ENCODE measurements at regions of chr21 and their contacts with region 1.

Region 1: DNA sequence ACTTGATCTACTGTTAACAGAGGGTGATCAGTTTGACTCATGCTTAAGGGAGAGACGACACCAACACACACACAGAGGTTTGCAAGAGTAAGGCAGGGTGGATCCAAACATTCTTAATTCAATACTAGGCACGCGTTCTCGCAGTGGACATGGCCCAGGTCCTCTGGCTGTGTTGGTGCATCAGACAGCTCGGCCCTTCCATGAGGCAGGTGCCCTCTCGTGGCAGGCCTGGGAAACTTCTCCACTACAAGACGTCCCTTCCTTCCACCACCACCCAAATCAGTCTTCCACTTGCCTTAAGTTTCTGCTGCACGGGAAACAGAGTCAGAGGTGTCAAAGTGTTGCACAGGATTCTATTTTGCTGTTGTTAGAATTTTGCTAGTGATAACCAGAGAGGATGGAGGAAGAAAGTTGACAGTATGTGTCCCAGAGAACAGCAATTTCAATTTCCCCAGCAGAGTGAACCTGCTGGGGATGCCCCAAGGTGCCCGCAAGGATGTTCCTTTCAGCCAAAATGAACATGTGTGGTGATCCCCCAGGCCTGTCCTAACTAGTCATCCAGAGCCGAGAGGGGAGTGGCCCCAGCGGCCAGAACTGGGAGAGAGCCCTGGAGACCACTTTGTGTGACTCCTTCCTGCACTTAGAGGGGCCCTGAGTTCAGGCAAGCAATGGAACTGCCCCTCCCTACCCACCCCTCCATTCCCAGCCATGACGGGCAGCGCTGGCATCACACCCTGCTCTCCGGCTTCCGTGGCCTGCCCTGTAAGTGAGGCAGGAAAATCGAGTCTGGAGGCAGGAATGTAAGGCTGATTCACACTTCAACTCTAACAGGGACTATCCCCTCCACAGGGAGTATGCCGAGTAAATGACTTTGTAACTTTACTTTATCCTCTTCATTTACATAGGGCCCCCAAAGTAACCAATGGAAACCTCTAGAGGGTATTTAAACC is 34.8 kb downstream of the MX1 start:
- DNase-seq: peak; percentile 34
- ATAC-seq: peak; percentile 45 to 66
- H3K4me3 ChIP-seq: no peak overlapping the region
- H3K27ac ChIP-seq: no peak overlapping the region
- H3K4me1 ChIP-seq: no peaks in the 10 kb centered on the region
- H3K27me3 ChIP-seq: peaks cover 0 to 4% (median 0%) of the 10 kb centered on the region in 3 donors
- CTCF ChIP-seq: peak; percentile 40 to 73 (median 64)
- POLR2A ChIP-seq: no peak

Region 2: DNA sequence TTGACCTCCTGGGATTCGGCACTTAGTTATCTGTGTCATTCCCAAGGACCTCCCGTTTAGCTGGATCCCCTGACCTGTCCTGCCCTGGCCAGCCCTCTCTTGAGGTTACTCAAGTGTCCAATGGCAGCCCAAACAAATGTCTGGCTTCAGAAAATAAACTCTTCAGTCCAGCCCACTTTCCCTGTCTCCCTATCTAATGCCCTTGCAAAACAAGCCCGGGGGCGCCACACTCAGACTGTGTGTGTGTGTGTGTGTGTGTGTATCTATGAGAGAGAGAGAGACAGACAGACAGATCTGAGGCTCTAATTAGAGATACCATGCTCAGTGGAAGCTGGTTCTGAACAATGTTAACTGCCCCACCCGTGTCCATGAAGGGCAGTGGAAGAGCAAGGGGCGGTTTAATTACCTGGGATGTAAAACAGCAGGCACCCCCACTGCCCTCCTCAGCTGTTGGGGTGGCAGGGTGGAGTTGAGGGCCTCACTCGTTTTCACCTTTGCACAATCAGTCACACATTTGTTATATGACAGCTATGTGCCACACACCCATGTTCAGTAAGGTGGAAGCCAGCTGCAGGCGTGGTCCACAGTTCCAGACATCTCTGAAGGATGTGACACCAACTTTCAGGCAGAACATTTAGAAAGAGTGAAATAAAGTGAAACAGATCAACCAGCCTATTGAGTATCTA is 1790.7 kb before region 1 on chr21:
- in situ Hi-C with region 1: no loop called
- intact Hi-C with region 1: no loop called
- DNase-seq: no peak
- ATAC-seq: no peak
- H3K4me3 ChIP-seq: no peak overlapping the region
- H3K27ac ChIP-seq: no peak overlapping the region
- H3K4me1 ChIP-seq: no peaks in the 10 kb centered on the region
- H3K27me3 ChIP-seq: no peaks in the 10 kb centered on the region
- CTCF ChIP-seq: no peak
- POLR2A ChIP-seq: no peak

Region 3: DNA sequence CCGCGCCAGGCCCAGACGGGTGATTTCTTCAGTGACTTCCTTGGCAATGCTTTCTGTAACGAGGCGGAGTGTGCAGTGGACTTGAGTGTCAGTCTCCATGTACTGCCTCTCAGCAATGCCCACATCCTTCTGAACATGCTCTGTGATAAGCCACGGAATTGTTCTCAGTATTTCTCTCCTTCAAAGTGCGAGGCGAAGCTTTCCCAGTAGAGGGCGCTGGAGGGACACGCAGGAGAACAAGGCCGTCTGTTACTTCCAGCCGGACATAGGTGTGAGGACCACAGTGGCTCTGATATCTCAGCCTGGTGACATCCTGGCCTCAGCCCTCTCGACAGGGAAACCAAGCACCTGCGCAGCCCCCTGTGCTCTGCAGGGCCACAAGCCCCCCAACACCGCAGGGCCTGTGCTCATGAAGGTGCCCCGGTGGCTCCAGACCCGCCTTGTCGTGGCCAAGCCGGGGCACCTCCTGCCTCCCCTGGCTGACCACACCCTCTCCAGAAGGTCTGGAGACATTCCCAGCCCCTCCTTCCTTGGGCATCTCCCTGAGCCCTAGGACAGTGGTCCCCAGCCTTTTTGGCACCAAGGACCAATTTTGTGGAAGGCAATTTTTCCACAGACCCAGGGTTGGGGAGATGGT is 338.9 kb before region 1 on chr21:
- in situ Hi-C with region 1: loop called in 2 of 4 experiments (anchors 25 kb)
- intact Hi-C with region 1: loop called (anchors 2 kb)
- DNase-seq: peak; percentile 29 to 63
- ATAC-seq: peak; percentile 78 to 82
- H3K4me3 ChIP-seq: no peak overlapping the region
- H3K27ac ChIP-seq: no peak overlapping the region
- H3K4me1 ChIP-seq: peaks cover 0 to 5% of the 10 kb centered on the region in 2 donors
- H3K27me3 ChIP-seq: no peaks in the 10 kb centered on the region
- CTCF ChIP-seq: peak; percentile 56 to 77 (median 72)
- POLR2A ChIP-seq: no peak

Region 4: GRCh38 chr21:41283211-41283818 is 177.5 kb before region 1 on chr21:
- in situ Hi-C with region 1: loop called in 2 of 4 experiments (anchors 10 kb)
- intact Hi-C with region 1: loop called (anchors 1 kb)
- DNase-seq: peak in 1 of 2 donors; percentile 12
- ATAC-seq: peak; percentile 80 to 82
- H3K4me3 ChIP-seq: no peak overlapping the region
- H3K27ac ChIP-seq: no peak overlapping the region
- H3K4me1 ChIP-seq: peaks cover 0 to 1% of the 10 kb centered on the region in 2 donors
- H3K27me3 ChIP-seq: no peaks in the 10 kb centered on the region
- CTCF ChIP-seq: peak in 4 of 5 experiments; percentile 35 to 65 (median 57)
- POLR2A ChIP-seq: no peak

Region 5: DNA sequence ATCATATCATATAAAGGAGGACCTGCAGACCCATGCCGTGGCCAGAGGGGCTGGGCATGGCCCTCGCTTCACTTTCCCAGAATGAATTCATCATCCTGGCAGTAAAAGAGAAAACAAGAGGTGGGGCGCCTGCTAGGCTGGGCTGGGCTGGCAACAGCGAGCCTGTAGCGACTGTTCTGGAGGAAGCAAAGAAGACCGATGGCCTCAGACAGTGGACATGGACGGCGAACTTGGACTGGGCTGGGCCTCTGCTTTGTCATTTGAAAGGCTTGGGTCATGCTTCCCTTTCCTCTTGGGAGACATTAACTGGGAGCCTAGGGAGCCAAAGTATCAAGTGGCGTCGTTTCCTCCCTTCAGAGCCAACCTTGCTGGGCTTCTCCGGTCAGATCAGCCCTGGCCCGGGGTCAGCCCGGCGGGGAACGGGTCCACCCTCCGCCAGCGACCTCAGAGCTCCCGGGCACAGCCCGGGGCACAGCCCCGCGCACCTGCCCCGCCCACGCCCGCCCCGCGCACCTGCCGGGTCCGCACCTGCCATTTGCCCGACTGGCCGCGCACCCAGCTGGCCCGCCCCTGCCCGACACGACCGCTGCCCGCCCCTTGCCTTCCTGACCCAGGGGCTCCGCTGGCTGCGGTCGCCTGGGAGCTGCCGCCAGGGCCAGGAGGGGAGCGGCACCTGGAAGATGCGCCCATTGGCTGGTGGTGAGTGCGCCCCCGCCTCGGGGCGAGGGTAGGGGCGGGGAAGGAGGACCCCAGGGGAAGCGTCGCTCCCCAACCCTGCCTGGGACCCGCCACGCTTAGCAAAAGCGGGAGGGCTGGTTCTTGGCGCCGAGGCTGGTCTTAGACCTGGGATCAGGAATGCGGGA is 144.4 kb before region 1 on chr21 and contains the start of gene FAM3B:
- in situ Hi-C with region 1: loop called in 1 of 4 experiments (anchors 25 kb)
- intact Hi-C with region 1: no loop called
- DNase-seq: no peak
- ATAC-seq: no peak
- H3K4me3 ChIP-seq: peak within 1 kb of the TSS in 3 of 4 donors; percentile 13 to 27 (median 20)
- H3K27ac ChIP-seq: no peak within 1 kb of the TSS
- H3K4me1 ChIP-seq: peaks cover 0 to 2% of the 10 kb centered on the region in 2 donors
- H3K27me3 ChIP-seq: peaks cover 11 to 25% (median 15%) of the 10 kb centered on the region in 3 donors
- CTCF ChIP-seq: no peak
- POLR2A ChIP-seq: no peak
- total RNA-seq, gene FAM3B: not detected

Region 6: GRCh38 chr21:41378879-41379278 is 82.0 kb before region 1 on chr21:
- in situ Hi-C with region 1: no loop called
- intact Hi-C with region 1: no loop called
- DNase-seq: no peak
- ATAC-seq: no peak
- H3K4me3 ChIP-seq: no peak overlapping the region
- H3K27ac ChIP-seq: no peak overlapping the region
- H3K4me1 ChIP-seq: no peaks in the 10 kb centered on the region
- H3K27me3 ChIP-seq: no peaks in the 10 kb centered on the region
- CTCF ChIP-seq: no peak
- POLR2A ChIP-seq: no peak